ENCODE measurements at regions of chr16 and their contacts with region 1.

Region 1: DNA sequence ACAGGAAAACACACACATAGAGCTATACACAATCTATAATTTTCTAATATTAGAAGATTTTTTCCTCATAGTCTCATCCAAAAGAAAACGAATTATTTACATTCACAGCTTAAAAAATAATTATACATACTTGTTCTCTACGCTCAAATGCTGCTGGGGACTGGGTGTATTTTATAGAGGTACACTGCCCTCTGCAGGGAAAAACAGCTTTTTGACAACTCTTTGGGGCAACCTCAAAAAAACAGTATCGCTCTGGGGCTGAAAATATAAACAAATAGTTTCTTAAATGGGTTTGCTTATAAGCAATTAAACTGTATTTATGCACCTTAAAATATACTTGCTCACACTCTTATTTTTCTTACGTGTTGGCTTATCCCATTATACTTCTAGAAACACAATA is 261.8 kb upstream of the PSMD7 start:
- DNase-seq: no peak
- ATAC-seq: peak; percentile 40; the same call in 1 of the 2 replicates
- H3K4me3 Mint-ChIP-seq: no peak overlapping the region
- H3K27ac Mint-ChIP-seq: 0 out of 2 replicates have a peak overlapping the region, but pooled peaks have one; percentile 16
- H3K4me1 Mint-ChIP-seq: peaks cover 71% of the 10 kb centered on the region
- H3K27me3 Mint-ChIP-seq: peaks cover 4% of the 10 kb centered on the region; the same call in 1 of the 2 replicates
- CTCF ChIP-seq: peak; percentile 42

Region 2: DNA sequence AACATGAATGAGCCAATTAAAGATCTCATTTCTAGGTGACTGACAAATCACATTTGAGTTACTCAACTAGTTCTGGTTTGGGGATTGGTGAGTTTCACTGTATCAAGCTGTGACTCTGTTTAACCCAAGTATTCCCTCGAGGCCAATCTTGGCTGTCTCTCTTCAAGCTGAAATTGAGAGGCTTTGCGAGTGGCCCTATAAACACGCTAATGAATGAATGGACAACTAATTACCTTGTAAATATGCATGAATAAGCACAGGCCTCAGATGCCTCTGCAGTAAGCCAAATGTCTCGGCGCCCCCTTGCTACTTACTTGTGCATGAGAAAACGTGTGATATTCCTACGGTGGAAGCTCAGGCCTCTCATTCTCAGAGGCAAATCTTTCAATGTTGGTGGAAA is 188.5 kb before region 1 on chr16:
- CTCF ChIA-PET with region 1: interaction called, 15 read pairs
- POLR2A ChIA-PET with region 1: no interaction called
- DNase-seq: peak; percentile 52
- ATAC-seq: peak; percentile 69; the same call in 1 of the 2 replicates
- H3K4me3 Mint-ChIP-seq: no peak overlapping the region
- H3K27ac Mint-ChIP-seq: no peak overlapping the region
- H3K4me1 Mint-ChIP-seq: peaks cover 14% of the 10 kb centered on the region
- H3K27me3 Mint-ChIP-seq: no peaks in the 10 kb centered on the region
- CTCF ChIP-seq: no peak

Region 3: DNA sequence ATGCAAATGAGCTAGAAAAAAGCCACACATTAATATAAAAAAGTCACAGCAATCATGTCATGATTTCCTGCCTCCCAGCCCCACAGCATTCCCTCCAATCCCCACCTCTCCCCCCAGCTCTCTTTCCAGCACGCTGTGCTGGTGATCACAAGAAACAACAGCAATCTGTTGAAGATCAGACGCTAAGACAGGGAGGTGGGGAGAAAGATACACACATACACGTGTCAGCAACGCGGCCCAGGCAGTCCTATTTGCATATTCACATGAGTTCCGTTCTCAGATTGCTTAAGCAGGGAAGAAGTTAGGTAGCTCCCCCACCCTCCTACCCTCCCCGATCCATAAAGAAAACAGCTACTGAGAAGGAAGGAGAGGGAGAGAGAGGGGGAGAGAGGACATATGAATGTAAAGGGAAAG is 143.7 kb before region 1 on chr16:
- CTCF ChIA-PET with region 1: interaction called, 10 read pairs
- POLR2A ChIA-PET with region 1: no interaction called
- DNase-seq: peak; percentile 41
- ATAC-seq: peak; percentile 80
- H3K4me3 Mint-ChIP-seq: peak overlapping the region; percentile 72
- H3K27ac Mint-ChIP-seq: peak overlapping the region; percentile 51
- H3K4me1 Mint-ChIP-seq: peaks cover 69% of the 10 kb centered on the region
- H3K27me3 Mint-ChIP-seq: peaks cover 9% of the 10 kb centered on the region; the same call in 1 of the 2 replicates
- CTCF ChIP-seq: no peak

Region 4: DNA sequence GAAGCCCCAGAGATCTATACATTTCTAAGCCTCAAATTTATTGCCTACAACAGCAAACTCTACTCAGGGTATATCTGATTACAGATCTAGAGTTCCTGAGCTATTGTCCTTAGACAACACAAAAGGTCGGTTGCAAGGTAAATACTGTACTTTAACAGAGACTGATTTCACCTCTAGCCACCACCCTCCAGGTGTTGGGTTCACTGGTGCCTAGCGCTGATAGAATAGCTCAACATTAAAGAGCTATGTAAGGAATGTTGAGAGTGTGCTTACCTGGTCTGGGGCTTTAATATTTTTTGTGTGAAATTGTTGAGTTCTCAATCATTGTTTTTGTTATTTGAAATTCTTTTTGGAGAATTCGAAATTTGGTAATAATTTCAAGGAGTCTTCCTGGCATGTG is 15.2 kb before region 1 on chr16:
- CTCF ChIA-PET with region 1: interaction called, 23 read pairs
- POLR2A ChIA-PET with region 1: no interaction called
- DNase-seq: no peak
- ATAC-seq: peak; percentile 99
- H3K4me3 Mint-ChIP-seq: no peak overlapping the region
- H3K27ac Mint-ChIP-seq: no peak overlapping the region
- H3K4me1 Mint-ChIP-seq: peaks cover 33% of the 10 kb centered on the region
- H3K27me3 Mint-ChIP-seq: peaks cover 11% of the 10 kb centered on the region
- CTCF ChIP-seq: no peak

Region 5: GRCh38 chr16:74107795-74108618 is 73.1 kb after region 1 on chr16:
- CTCF ChIA-PET with region 1: interaction called, 23 read pairs
- POLR2A ChIA-PET with region 1: no interaction called
- DNase-seq: peak; percentile 80
- ATAC-seq: peak; percentile 91
- H3K4me3 Mint-ChIP-seq: peak overlapping the region; percentile 21; the same call in 1 of the 2 replicates
- H3K27ac Mint-ChIP-seq: peak overlapping the region; percentile 66; the same call in 1 of the 2 replicates
- H3K4me1 Mint-ChIP-seq: peaks cover 15% of the 10 kb centered on the region
- H3K27me3 Mint-ChIP-seq: no peaks in the 10 kb centered on the region
- CTCF ChIP-seq: peak; percentile 79

Region 6: DNA sequence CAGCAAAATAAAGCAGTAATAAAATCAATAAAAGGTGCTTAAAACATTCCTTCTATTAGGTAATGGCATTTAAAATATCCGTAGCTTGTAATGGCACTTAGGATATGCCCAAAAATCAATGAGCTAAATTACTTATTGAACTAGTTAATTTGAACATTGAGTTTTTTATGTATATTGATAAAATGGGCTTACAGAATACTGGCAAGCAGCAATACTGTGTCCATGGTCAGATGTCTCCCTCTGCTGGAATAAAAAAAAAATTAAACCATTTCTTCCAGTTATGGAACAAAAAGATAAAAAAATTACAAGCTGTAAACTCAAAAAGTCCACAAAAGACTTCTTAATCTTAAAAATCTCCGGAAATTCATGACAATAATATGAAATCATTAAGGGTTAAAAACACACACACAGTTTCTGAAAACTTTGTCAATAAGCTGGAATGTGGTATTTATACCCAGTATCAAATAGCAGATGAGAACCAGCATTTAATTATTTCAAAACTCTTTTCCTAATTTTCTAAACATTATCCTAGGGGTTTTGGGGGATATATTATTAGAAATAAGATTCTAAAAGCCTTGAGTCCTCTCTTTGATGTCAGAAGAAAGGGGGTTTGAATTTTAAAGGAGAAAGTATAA is 240.3 kb after region 1 on chr16:
- CTCF ChIA-PET with region 1: interaction called, 11 read pairs
- POLR2A ChIA-PET with region 1: no interaction called
- DNase-seq: no peak
- ATAC-seq: no peak
- H3K4me3 Mint-ChIP-seq: no peak overlapping the region
- H3K27ac Mint-ChIP-seq: no peak overlapping the region
- H3K4me1 Mint-ChIP-seq: peaks cover 21% of the 10 kb centered on the region
- H3K27me3 Mint-ChIP-seq: no peaks in the 10 kb centered on the region
- CTCF ChIP-seq: no peak

Measured in WTC11 (cell line).